ENCODE measurements at regions of chr15 and their contacts with region 1.

Region 1: DNA sequence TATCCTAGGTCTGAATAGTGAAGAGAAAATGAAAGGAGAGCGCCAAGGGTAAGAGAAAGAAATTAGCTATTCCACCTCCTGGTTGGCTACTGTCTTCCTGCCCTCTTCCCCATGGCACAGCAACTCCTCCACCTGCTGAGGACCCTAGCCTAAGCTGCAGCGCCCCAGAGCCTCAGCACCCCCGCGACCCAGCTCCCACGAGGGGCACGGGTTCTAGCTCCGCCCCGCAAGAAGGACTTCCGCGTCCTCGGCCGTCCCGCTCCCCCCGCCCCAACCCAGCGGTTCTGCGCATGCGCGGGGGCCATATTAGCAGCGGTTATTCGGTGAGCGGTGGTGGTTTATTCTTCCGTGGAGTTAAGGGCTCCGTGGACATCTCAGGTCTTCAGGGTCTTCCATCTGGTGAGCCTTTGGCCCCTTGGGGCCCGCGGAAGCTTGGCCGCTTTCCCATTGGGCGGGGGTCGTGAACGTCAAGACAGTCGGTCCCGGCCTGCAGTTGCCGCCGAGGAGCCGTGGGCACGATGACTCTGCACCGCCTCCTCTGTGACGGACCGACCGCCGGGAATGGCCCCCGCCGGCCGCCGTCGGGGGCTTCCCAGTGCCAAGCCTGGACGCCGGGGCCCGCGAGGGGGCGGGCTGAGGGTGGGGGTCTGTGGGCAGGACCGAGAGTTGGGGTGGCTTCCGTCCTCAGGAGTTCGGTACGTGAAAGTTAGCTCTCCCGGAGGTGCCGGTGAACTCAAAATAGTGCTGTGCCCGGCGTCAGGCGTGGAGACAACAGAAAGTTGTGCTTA is at the start of gene PSMA4:
- DNase-seq: peak; percentile 90 to 95 (median 95)
- H3K4me3 ChIP-seq: peak within 1 kb of the TSS; percentile 84 to 95 (median 93)
- H3K27ac ChIP-seq: peak within 1 kb of the TSS; percentile 97 to 99
- H3K4me1 ChIP-seq: peaks cover 7 to 21% (median 16%) of the 10 kb centered on the region in 4 experiments
- H3K27me3 ChIP-seq: no peaks in the 10 kb centered on the region

Region 2: DNA sequence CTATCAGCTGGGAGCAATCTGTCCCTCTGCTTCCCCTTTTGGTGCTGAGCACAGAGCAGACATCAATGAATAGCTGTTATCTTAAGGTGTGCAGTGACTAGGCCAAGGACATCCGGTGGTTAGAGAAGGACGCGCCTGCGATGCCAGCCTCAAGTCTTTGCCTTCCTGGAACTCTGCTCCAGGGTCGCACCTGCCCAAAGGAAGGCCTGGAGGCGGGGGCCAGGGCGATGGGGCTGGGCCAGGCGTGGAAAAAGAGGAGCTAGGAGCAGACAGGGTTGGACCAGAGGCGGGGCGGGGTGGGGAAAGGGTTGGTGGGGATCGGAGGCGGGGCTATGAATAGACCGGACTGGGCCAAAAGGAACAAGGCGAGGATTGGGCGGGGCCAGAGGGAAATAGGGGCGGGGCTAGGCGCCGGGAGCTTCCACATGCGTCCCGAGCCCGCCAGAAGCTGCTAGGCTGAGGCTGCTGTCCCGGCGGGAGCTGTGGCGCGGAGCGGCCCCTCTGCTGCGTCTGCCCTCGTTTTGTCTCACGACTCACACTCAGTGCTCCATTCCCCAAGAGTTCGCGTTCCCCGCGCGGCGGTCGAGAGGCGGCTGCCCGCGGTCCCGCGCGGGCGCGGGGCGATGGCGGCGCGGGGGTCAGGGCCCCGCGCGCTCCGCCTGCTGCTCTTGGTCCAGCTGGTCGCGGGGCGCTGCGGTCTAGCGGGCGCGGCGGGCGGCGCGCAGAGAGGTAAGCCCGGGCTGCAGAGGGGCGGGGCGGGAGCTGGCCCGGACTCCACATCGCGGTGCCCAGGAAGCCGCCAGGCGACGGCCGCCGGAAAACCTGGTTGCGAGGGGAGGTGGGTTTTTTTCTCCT is 25.0 kb after region 1 on chr15 and contains the start of gene CHRNA5:
- CTCF ChIA-PET with region 1: interaction called, 9 read pairs
- POLR2A ChIA-PET with region 1: interaction called, 15 read pairs
- DNase-seq: peak; percentile 81 to 94 (median 91)
- H3K4me3 ChIP-seq: peak within 1 kb of the TSS; percentile 78 to 96 (median 85)
- H3K27ac ChIP-seq: no peak within 1 kb of the TSS
- H3K4me1 ChIP-seq: peaks cover 3 to 35% (median 27%) of the 10 kb centered on the region in 4 experiments
- H3K27me3 ChIP-seq: no peaks in the 10 kb centered on the region

Region 3: GRCh38 chr15:79179108-79179561 is 638.8 kb after region 1 on chr15:
- CTCF ChIA-PET with region 1: no interaction called
- POLR2A ChIA-PET with region 1: no interaction called
- DNase-seq: no peak
- H3K4me3 ChIP-seq: no peak overlapping the region
- H3K27ac ChIP-seq: no peak overlapping the region
- H3K4me1 ChIP-seq: no peaks in the 10 kb centered on the region
- H3K27me3 ChIP-seq: peaks cover 0 to 8% (median 0%) of the 10 kb centered on the region in 5 experiments